Heart right ventricle (tissue), 16 donors: ENCODE measurements at regions of chr22 and their contacts with region 1.

Region 1: DNA sequence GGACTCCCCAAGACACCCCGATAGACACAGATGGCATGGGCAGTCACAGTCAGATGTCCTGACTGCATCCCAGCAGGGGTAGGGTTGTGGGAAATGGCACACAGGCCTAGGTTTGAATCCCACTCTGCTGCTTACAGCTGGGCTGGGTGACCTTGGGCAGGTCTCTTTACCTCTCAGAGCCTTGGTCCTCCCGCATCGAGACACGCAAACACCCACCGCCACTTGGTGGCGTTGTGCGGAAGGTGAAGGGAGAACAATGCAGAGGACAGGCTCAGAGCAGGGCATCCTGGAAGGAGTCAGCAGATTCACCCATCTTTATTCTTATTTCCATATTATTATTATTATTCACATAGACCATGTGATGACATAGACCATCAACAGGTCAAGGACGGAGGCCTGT is 140.5 kb downstream of the MIAT start:
- DNase-seq: no peak
- ATAC-seq: no peak
- H3K4me3 ChIP-seq: no peak overlapping the region
- H3K27ac ChIP-seq: no peak overlapping the region
- H3K4me1 ChIP-seq: no peaks in the 10 kb centered on the region
- H3K27me3 ChIP-seq: no peaks in the 10 kb centered on the region
- CTCF ChIP-seq: no peak

Region 2: DNA sequence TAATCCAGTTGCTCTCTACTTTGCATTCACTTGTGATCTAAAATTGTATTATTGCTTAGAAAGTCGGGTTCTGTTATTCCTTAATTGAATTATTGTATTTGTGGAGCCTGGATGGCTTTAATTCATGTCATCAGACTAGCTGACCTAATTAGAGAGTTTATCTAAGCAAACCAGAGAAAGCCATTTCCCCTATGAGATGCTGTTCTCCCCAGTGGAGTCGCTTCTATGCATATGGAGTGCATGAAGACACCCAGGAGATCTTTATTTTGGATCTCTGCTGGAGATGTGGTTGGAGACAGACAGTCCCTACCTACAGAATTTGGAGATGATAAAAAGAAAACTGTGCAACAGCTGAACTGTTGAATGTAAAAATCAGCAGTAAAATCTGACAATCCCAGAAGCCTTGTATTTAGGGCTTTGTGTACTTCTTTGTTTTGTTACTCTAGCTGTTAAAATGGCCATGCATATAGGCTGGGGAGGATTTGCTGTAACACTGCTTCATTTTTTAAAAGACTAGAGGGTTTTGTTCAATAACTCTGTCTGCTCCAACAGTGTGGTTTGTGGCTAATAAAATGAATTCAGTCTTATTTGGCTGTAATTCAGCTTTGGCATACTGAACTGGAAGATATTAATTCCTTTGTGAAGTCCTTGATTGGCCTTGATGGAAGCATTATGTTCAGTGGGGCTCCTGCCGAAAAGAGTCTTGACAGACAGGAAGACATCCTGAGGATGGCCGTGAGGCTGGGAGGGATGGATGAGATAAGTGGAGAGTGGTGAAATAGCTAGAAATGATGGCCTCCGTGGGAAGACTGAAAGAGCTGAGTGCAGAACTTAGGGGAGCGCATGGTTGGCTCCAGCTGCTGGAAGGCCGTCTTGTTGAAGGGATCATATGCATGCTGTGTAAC is 1100.9 kb before region 1 on chr22:
- intact Hi-C with region 1: no loop called
- DNase-seq: no peak
- ATAC-seq: no peak
- H3K4me3 ChIP-seq: no peak overlapping the region
- H3K27ac ChIP-seq: no peak overlapping the region
- H3K4me1 ChIP-seq: peaks cover 0 to 29% (median 24%) of the 10 kb centered on the region in 9 donors
- H3K27me3 ChIP-seq: no peaks in the 10 kb centered on the region
- CTCF ChIP-seq: no peak

Region 3: DNA sequence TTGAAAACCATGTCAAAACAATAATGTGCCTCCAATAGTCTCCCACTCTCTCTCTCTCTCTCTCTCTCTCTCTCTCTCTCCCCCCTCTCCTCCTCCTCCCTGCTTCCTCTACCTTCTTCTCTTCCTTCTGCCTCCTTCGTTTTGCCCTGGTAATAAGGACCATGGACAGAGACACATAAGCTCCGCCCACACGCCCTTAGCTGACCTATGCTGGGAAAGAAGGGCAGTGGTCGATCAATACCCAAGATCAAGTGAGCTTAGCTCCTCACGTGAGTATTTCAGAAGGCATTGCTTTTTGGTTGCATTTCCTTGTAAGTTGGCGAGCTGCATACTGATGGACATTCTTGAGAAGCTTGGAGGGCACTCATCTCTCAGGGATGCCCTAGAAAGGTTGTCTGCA is 54.3 kb after region 1 on chr22:
- intact Hi-C with region 1: loop called in 1 of 10 experiments (anchors 10 kb)
- DNase-seq: no peak
- ATAC-seq: no peak
- H3K4me3 ChIP-seq: no peak overlapping the region
- H3K27ac ChIP-seq: no peak overlapping the region
- H3K4me1 ChIP-seq: peaks cover 0 to 10% (median 0%) of the 10 kb centered on the region in 9 donors
- H3K27me3 ChIP-seq: no peaks in the 10 kb centered on the region
- CTCF ChIP-seq: no peak

Region 4: GRCh38 chr22:26860301-26860700 is 62.4 kb after region 1 on chr22:
- intact Hi-C with region 1: loop called in 2 of 10 experiments (anchors 10 kb)
- DNase-seq: no peak
- ATAC-seq: no peak
- H3K4me3 ChIP-seq: no peak overlapping the region
- H3K27ac ChIP-seq: no peak overlapping the region
- H3K4me1 ChIP-seq: no peaks in the 10 kb centered on the region
- H3K27me3 ChIP-seq: no peaks in the 10 kb centered on the region
- CTCF ChIP-seq: no peak